Activated T-helper 1 cell treated with anti-CD3 and anti-CD28 coated beads, Interleukin-12 subunit alpha, Interleukin-12 subunit beta, Interleukin-2, Interleukin-4 antibody, amounts not matched to agents 30 ng/mL and 10 ng/mL and 1 ng/mL, durations not matched to agents 14 hours and 24 hours and 36 hours (primary cell): ENCODE measurements at regions of chr14 and their contacts with region 1.

Region 1: GRCh38 chr14:88005978-88006851 is 1.3 kb downstream of the GPR65 start:
- DNase-seq: peak; percentile 68
- H3K4me3 Mint-ChIP-seq: peak overlapping the region; percentile 93
- H3K27ac Mint-ChIP-seq: peak overlapping the region; percentile 94
- H3K4me1 Mint-ChIP-seq: peaks cover 70% of the 10 kb centered on the region
- H3K27me3 Mint-ChIP-seq: no peaks in the 10 kb centered on the region

Region 2: DNA sequence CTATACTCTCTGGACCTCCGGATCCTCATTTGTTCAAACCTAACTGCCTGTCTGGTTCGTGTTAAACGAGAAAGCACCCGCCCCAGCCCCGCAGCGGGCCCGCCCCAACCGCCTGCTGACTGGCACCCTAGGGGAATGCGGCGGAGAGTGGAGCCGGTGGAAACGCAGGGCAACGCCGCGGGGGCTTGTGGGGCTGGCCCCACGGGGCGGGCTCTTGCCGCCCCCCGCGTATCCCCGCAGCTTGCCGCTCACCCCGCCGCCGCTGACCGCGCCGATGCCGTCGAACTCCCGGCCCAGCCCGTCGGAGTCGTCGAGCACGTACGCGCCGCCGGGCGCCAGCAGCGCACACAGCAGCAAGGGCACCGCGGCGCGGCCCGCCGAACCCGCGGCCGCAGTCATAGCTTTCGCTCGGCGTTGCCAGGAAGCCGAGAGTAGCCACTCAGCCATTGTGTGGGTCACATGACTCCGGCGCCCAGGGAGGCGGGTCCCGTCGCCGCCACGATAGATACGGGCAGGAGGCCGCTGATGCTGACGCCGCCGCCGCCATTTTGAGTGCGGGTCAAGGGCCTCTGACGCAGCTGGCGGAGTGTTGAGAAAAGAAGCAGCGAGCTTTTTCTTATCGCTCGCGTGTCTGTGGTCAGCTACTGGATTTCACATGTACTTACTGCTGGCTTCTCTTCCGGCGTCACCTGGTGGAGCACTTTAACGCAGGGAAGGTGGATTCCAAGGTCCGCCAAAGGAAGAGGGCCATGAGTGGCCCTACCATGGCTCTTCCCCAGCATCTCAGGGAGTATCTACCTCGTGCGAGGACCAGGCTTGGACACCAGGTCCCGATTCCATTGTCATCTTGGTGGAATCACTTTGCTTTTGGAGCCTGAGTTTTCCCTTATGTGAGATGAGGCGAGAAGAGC is 13.2 kb before region 1 on chr14 and contains the start of gene GALC:
- intact Hi-C with region 1: loop called (anchors 1 kb)
- DNase-seq: peak; percentile 93
- H3K4me3 Mint-ChIP-seq: peak within 1 kb of the TSS; percentile 92
- H3K27ac Mint-ChIP-seq: peak within 1 kb of the TSS; percentile 98
- H3K4me1 Mint-ChIP-seq: peaks cover 55% of the 10 kb centered on the region
- H3K27me3 Mint-ChIP-seq: no peaks in the 10 kb centered on the region
- total RNA-seq, gene GALC: 8.6 and 8.7 TPM in 2 replicates

Region 3: DNA sequence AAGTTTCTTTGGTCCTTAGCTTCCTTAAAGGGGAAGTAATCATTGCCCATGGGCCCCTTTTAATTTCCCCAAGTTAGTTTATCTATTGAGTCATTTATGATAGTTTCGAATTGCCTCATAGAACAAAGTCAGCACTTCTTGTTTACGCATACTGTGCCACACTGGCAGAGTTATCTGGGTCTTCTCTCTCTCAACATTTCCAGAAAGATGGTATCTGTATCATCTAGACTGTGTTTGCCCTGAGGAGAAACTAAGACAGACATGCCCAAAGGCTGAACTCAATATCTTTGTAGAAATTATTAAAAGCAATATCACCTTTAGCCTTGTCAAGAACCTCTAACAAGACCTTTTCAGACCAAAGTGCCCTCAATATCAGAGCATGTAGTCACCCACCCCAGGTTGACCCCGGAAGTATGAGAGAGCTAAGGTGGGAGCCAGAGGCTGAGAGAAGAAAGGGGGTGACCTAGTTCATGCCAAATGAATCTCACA is 38.7 kb after region 1 on chr14:
- intact Hi-C with region 1: loop called (anchors 5 kb)
- DNase-seq: no peak
- H3K4me3 Mint-ChIP-seq: no peak overlapping the region
- H3K27ac Mint-ChIP-seq: peak overlapping the region; percentile 41
- H3K4me1 Mint-ChIP-seq: peaks cover 15% of the 10 kb centered on the region
- H3K27me3 Mint-ChIP-seq: no peaks in the 10 kb centered on the region

Region 4: DNA sequence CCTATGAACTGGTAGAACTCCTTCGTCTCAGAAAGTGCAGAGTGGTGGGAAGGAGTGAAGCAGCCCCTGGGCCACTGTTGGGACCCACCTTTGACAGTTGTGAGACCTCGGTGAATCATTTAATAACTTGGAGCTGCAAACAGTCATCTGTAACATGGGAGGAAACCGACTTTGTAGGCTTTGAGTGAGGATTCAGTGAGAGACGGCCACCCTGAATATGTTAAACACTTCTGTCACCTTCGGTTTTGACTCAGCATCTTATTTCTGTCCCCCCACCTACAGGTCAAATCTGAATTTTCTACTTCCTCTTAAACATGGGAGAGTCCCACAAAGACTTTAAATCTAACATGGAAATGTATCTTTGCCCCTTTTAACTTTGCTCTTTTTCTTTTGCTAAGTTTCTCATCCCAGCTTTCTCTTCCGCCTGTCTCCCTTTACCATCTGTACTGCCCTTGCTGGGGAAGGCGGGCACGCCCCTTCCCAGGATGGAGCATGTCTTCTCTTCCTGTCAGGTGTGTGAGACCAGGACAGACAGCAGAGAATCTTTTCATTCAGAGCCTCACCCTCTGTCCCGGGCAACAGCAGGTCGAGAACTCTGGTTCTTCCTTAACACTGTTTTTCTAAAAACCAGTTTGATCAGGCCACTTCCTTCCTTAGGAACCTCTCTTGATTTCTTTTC is 593.7 kb after region 1 on chr14:
- intact Hi-C with region 1: loop called (anchors 5 kb)
- DNase-seq: peak; percentile 6
- H3K4me3 Mint-ChIP-seq: peak overlapping the region; percentile 64
- H3K27ac Mint-ChIP-seq: peak overlapping the region; percentile 91
- H3K4me1 Mint-ChIP-seq: peaks cover 48% of the 10 kb centered on the region
- H3K27me3 Mint-ChIP-seq: no peaks in the 10 kb centered on the region

Region 5: DNA sequence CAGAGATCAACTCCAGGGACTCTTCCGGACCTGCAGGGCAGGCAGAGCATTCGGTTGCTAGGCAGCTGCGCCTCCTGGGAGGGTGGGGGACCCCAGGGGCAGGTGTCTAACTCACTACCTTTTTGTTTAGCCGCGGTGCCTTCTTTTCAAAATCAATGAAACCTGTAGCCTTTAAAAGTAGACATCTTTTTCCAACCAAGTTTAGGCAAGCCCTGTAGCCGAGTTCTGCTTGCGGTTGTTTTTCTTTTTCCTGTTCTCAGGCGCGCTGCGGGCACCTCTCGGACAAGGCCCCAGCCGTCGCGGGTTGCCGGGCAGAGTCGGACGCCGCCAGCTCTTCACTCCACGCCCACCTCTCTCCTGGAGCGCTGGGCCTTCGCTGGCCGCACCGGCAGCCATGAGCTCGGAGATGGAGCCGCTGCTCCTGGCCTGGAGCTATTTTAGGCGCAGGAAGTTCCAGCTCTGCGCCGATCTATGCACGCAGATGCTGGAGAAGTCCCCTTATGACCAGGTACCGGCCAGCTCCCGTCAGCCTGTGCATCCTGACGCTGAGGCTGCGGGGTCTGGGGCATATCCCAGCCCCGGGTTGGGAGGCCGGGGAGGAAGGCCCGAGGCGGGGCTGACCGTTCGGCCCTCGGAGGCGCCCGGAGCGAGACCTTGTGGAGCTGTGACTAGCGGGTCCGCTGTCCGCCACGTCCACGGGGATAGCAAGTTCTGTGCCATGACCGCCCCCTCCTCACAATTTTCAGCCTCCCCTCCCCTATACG is 818.3 kb after region 1 on chr14 and contains the start of gene TTC8:
- intact Hi-C with region 1: loop called (anchors 5 kb)
- DNase-seq: peak; percentile 74
- H3K4me3 Mint-ChIP-seq: peak within 1 kb of the TSS; percentile 84
- H3K27ac Mint-ChIP-seq: peak within 1 kb of the TSS; percentile 93
- H3K4me1 Mint-ChIP-seq: peaks cover 14% of the 10 kb centered on the region
- H3K27me3 Mint-ChIP-seq: peaks cover 15% of the 10 kb centered on the region
- total RNA-seq, gene TTC8: 3.5 and 4.6 TPM in 2 replicates